ENCODE measurements at regions of chr11 and their contacts with region 1.

Region 1: GRCh38 chr11:61392981-61393595 is 701 bp downstream of the TMEM216 start:
- DNase-seq: peak; percentile 29
- ATAC-seq: peak; percentile 35
- H3K4me3 Mint-ChIP-seq: peak overlapping the region; percentile 80
- H3K27ac Mint-ChIP-seq: peak overlapping the region; percentile 94
- H3K4me1 Mint-ChIP-seq: peaks cover 27% of the 10 kb centered on the region
- H3K27me3 Mint-ChIP-seq: peaks cover 3% of the 10 kb centered on the region

Region 2: GRCh38 chr11:61254403-61255025 is 138.6 kb before region 1 on chr11:
- CTCF ChIA-PET with region 1: interaction called, 13 read pairs
- POLR2A ChIA-PET with region 1: no interaction called
- DNase-seq: peak; percentile 78
- ATAC-seq: peak; percentile 96
- H3K4me3 Mint-ChIP-seq: no peak overlapping the region
- H3K27ac Mint-ChIP-seq: no peak overlapping the region
- H3K4me1 Mint-ChIP-seq: no peaks in the 10 kb centered on the region
- H3K27me3 Mint-ChIP-seq: no peaks in the 10 kb centered on the region

Region 3: DNA sequence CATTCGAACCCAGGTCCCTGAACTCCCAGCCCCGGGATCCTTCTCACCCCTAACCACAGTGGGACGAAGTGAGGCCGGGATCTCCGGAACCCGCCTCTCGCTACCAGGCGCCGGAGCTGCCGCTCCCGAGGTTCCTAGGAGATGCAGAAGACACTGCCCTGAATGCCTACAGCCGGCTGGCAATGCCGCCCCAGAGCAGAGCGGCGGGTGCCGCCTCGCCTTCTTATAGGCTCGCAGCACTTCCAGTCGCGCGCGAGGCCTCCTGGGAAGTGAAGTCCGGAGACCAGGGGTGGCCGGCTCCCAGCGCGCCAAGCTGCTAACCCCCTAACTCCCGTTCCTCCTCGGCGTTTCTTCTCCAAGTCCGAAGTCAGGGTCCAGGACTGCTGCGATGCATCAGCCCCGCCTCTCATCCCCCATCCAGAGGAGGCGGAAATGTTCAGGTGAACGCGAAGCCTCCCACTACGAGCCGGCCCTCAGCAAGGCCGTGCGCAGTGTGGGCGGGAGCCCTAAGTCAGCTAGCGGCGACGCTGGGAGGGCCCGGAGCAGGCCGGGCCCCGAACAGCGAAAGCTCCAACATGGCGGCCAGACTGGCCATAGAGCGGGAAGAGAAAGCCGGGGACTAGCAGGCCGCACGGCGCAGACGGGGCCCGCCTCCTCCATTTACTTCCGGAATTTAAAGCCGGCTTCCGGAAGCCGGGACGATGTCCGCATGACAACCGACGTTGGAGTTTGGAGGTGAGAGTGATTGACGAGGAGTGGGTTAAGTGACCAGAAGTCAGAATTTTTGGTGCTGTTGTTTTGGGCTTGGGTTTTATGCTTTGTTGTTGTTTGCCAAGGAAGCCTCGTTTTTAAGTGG is 31.2 kb before region 1 on chr11 and contains the starts of genes CYB561A3 and TMEM138:
- CTCF ChIA-PET with region 1: interaction called, 19 read pairs
- POLR2A ChIA-PET with region 1: interaction called, 17 read pairs
- DNase-seq: peak; percentile 95
- ATAC-seq: peak; percentile 97
- H3K4me3 Mint-ChIP-seq: peak within 1 kb of the TSS; percentile 95
- H3K27ac Mint-ChIP-seq: peak within 1 kb of the TSS; percentile 94
- H3K4me1 Mint-ChIP-seq: peaks cover 37% of the 10 kb centered on the region
- H3K27me3 Mint-ChIP-seq: no peaks in the 10 kb centered on the region
- total RNA-seq, gene CYB561A3: 53.2 to 55.6 TPM
- total RNA-seq, gene TMEM138: 57.4 to 57.5 TPM

Region 4: DNA sequence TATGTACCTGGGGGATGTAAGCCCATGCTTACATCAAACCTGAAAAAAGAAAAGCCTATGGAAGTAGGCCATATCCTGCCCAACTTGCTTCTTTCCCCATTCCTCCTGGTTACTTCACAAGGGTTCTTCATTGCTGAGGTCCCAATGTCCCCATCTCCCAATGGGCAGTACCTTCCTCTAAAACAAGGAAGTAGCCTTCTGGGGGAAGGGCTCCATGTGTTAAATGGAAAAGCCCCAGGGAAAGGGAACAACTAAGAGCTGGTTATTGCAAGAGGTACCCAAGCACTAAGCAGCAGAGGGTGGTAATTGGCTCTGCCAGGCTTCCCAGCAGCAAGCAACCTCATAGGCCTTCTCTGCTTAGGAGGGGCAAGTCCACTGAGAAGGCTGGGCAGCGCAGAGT is 10.6 kb after region 1 on chr11:
- CTCF ChIA-PET with region 1: interaction called, 21 read pairs
- POLR2A ChIA-PET with region 1: interaction called, 22 read pairs
- DNase-seq: no peak
- ATAC-seq: no peak
- H3K4me3 Mint-ChIP-seq: no peak overlapping the region
- H3K27ac Mint-ChIP-seq: no peak overlapping the region
- H3K4me1 Mint-ChIP-seq: no peaks in the 10 kb centered on the region
- H3K27me3 Mint-ChIP-seq: no peaks in the 10 kb centered on the region

Region 5: DNA sequence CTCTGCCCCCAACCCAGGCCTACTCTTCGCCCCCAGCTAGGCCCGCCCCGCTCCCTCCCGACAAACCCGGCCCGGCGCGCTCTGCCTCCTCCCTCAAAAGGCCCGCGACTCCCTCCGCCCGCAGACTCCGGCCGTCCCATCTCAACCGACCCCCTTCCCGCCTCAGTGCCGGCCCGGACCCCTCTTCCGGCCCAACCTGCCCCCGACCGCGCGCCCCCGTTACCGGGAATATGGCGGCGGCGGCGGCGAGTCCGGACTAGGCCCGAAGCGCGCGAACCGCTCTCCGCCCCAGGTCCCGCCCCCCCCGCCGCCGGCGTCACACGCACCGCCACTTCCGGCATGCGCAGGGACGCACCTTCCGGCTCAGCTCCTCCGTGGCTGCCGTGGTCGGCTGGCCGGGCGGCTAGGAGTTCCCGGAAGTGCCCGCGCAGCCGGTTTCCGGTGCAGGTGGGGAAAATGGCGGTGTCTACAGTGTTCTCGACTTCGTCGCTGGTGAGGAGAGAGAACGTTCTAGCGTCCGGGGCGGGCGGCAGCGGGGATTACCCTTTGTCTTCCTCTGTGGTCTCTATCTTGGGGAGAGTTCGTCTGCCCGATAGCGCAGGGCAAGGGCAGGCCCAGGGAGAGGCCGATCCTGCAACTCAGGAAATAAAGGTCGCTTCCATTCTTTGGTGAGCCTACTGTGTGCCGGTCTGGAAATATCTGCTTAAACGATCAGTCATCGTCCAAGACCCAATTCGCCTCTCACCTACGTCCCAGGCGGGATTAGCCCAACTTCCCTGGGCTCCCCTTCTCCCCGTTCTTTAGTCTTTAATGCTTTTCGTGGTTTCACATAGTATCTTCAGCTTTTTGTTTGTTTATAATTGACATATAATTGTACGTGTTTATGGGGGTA is 36.8 kb after region 1 on chr11 and contains the starts of genes CPSF7 and SDHAF2:
- CTCF ChIA-PET with region 1: interaction called, 15 read pairs
- POLR2A ChIA-PET with region 1: interaction called, 16 read pairs
- DNase-seq: peak; percentile 98
- ATAC-seq: peak; percentile 93
- H3K4me3 Mint-ChIP-seq: peak within 1 kb of the TSS; percentile 99
- H3K27ac Mint-ChIP-seq: peak within 1 kb of the TSS; percentile 100
- H3K4me1 Mint-ChIP-seq: peaks cover 56% of the 10 kb centered on the region
- H3K27me3 Mint-ChIP-seq: no peaks in the 10 kb centered on the region
- total RNA-seq, gene CPSF7: 94.8 to 98.4 TPM
- total RNA-seq, gene SDHAF2: 51.6 to 54.3 TPM

Measured in activated CD8-positive, alpha-beta T cell treated with anti-CD3 and anti-CD28 coated beads, Interleukin-2, amount 10 ng/mL, durations not matched to agents 7 days and 5 days (primary cell).